Left cardiac atrium (tissue), 4 donors: ENCODE measurements at regions of chr10 and their contacts with region 1.

Region 1: GRCh38 chr10:70758757-70759514 is 26.2 kb downstream of the TBATA start:
- DNase-seq: peak; percentile 72
- ATAC-seq: peak; percentile 59 to 79

Region 2: DNA sequence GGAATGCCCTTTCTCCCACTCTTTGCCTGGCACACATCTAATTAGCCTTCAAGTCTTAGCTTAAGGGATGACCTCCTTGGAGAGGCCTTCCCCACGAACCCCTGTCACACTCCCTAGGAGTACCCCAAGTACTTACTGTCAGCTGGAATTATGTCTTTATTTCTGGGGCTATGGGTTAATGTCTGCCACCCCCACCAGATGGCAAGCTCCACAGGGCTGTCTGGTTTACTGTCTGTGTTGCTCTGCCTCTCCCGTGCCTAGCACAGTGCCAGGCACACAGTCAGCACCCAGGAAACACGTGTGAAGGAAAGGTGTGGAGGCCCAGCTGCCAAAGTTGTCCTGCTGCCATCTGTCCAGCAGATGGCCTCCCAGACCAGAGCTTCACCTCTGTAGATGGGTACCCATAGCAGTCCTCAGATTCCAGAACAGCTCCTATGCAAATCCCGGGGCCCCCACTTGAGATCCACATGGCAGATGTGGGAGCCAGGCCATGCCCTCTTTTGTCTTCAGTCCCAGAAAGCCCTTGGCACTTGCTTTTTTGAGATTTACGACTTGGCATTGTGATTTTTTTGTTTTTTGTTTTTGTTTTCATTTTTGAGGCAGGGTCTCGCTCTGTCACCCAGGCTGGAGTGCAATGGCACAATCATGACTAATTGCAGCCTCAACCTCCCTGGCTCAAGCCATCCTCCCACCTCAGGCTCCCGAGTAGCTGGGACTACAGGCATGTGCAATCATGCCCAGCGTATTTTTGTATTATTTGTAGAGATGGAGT is 297.5 kb before region 1 on chr10:
- intact Hi-C with region 1: loop called (anchors 5 to 10 kb)
- DNase-seq: no peak
- ATAC-seq: peak; percentile 34 to 46

Region 3: DNA sequence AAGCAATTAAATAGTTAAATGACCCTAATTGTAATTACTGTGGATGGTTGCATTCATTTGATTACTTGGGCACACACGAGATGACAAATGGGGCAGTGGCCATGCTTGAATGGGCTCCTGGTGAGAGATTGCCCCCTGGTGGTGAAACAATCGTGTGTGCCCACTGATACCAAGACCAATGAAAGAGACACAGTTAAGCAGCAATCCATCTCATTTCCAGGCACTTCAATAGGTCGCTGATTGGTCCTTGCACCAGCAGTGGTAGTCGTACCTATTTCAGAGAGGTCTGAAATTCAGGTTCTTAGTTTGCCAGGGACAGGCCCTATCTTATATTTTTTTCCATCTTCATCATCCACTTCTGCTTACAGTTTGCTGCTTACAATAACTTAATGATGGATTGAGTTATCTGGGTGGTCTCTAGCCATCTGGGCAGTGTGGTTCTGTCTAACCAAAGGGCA is 121.2 kb after region 1 on chr10:
- intact Hi-C with region 1: loop called in 1 of 2 experiments (anchors 5 kb)
- DNase-seq: peak; percentile 78
- ATAC-seq: peak; percentile 79 to 82

Region 4: GRCh38 chr10:71270301-71271220 is 511.6 kb after region 1 on chr10:
- intact Hi-C with region 1: no loop called
- DNase-seq: peak; percentile 54
- ATAC-seq: peak; percentile 25 to 38